Breast epithelium (tissue), 4 donors: ENCODE measurements at regions of chr1 and their contacts with region 1.

Region 1: GRCh38 chr1:45011837-45012638 is at the start of gene UROD:
- DNase-seq: peak; percentile 91 to 92
- H3K4me3 ChIP-seq: peak within 1 kb of the TSS; percentile 81 to 99 (median 98)
- H3K27ac ChIP-seq: peak within 1 kb of the TSS; percentile 79 to 86
- H3K4me1 ChIP-seq: peaks cover 5 to 31% of the 10 kb centered on the region in 2 donors
- H3K27me3 ChIP-seq: no peaks in the 10 kb centered on the region
- CTCF ChIP-seq: no peak
- POLR2A ChIP-seq: no peak
- total RNA-seq, gene UROD: 74.1 to 115 (median 77.1) TPM

Region 2: DNA sequence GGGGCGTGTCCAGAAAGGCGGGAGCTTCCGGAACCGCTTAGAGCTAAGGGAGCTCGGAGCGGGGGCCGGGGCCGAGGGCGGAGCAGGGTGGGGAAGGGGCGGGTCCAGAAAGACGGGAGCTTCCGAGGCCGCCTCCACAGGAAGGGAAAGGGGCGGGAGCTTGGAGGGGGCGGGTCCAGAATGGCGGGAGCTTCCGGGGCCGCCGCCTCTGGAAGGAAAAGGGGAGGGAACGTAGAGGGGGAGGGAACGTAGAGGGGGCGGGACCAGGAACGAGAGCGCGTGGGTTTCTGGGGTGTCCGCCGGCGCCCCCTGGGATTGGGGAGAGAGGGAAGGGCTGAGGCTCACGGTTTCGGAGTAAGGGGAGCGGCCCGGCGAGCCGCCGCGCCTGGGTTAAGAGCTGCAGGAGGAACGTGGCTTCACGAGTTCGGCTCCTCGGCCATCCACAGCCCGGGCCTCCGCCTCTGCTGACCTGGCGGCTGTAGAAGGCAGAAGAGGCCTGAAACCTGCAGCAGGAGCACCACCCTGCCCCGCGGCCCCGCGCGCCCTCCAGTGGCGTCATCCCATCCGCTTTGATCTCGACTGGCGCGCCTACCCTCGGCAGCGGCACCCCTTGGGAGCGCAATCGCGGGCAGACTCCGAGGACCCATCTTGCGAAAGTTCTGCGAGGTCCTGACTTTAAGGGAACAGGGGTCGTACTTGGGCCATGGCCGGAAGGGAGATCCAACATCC is 291.7 kb after region 1 on chr1:
- intact Hi-C with region 1: loop called (anchors 5 kb)
- DNase-seq: peak; percentile 98 to 99
- H3K4me3 ChIP-seq: peak overlapping the region; percentile 62 to 86 (median 67)
- H3K27ac ChIP-seq: peak overlapping the region; percentile 91 to 96
- H3K4me1 ChIP-seq: peaks cover 0 to 6% of the 10 kb centered on the region in 2 donors
- H3K27me3 ChIP-seq: no peaks in the 10 kb centered on the region
- CTCF ChIP-seq: peak; percentile 17 to 58 (median 48)
- POLR2A ChIP-seq: peak; percentile 55

Region 3: DNA sequence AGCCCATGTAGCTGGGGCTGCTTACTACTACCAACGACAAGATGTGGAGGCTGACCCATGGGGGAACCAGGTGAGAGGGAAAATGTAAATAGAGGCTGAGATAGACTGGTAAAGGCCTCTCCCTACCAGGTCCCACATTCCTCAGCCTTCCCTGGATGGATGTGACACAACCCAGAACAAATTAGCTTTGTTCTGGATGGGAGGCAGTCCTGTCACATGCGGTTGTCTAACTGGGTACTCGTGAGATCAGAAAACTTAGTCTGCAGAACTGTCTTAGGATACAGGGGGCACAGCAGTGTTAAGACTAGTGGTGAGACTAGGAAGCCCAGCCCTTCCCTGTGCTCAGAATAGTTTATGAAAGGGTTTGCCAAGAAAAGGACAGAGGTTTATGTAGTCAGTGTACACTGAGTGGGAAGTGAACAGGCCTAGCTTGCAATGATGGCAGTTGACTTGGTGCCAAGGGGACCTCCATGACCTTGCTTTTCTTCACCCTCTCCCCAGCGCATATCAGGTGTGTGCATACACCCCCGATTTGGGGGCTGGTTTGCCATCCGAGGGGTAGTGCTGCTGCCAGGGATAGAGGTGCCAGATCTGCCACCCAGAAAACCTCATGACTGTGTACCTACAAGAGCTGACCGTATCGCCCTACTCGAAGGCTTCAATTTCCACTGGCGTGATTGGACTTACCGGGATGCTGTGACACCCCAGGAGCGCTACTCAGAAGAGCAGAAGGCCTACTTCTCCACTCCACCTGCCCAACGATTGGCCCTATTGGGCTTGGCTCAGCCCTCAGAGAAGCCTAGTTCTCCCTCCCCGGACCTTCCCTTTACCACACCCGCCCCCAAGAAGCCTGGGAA is 496.5 kb after region 1 on chr1:
- intact Hi-C with region 1: loop called (anchors 2 kb)
- DNase-seq: no peak
- H3K4me3 ChIP-seq: no peak overlapping the region
- H3K27ac ChIP-seq: no peak overlapping the region
- H3K4me1 ChIP-seq: no peaks in the 10 kb centered on the region
- H3K27me3 ChIP-seq: no peaks in the 10 kb centered on the region
- CTCF ChIP-seq: peak in 1 of 3 donors; percentile 26
- POLR2A ChIP-seq: no peak

Region 4: GRCh38 chr1:46254668-46255067 is 1242.6 kb after region 1 on chr1:
- intact Hi-C with region 1: loop called (anchors 5 kb)
- DNase-seq: no peak
- H3K4me3 ChIP-seq: no peak overlapping the region
- H3K27ac ChIP-seq: no peak overlapping the region
- H3K4me1 ChIP-seq: no peaks in the 10 kb centered on the region
- H3K27me3 ChIP-seq: no peaks in the 10 kb centered on the region
- CTCF ChIP-seq: no peak
- POLR2A ChIP-seq: no peak

Region 5: DNA sequence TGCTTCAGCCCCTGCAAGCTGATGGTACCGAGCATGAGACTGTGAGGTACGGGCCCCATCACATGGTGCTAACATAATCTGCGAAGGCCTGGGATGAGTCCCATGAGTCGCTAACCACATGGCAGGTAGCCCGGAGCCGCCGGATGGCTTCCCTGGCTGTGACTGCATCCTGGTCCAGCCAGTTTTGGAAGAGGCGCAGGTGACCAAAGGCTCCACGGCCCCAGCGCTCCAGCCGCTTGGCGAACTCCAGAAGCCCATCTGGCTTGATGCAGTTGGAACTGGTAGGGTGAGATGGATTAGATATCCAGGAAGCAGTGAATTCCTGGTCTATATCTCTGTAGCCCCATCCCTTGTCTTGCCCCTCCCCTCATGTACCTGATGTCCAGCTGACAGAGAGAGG is 1266.8 kb after region 1 on chr1:
- intact Hi-C with region 1: no loop called
- DNase-seq: peak in 1 of 2 donors; percentile 51
- H3K4me3 ChIP-seq: no peak overlapping the region
- H3K27ac ChIP-seq: peak overlapping the region; percentile 12 to 44
- H3K4me1 ChIP-seq: no peaks in the 10 kb centered on the region
- H3K27me3 ChIP-seq: no peaks in the 10 kb centered on the region
- CTCF ChIP-seq: no peak
- POLR2A ChIP-seq: no peak